ENCODE measurements at regions of chr6 and their contacts with region 1.

Region 1: DNA sequence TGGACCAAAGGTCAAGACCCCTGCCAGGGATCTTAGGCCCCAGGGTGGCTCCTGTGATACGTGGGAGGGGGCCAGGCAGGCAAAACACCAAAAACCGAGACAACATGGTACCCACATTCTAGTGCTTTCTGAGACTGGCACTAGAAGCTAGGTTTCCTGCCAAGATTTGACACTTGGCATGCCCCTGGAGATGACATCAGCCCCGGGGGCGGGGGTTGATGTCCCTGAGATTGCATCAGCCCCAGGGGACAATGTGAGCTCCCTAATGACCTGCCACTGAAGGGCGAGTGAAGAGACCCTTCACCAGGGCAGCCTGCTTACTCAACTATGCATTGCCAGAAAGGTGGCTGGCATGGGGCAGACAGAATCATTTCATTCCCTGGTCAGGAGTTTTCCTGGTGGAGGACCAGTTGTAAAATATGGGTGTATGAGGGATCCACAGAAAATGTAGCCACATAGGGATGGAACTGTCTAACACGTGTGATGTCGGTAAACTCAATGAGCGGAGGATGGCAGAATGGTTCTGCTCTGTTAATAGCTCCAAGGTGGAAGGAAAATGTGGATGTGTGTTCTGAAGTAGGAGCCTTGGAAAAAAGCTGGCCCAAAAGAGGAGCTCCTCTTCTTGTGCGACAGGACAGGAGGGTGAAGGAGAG is 219.7 kb downstream of the UNC5CL start:
- DNase-seq: no peak
- ATAC-seq: no peak
- H3K4me3 ChIP-seq: no peak overlapping the region
- H3K4me3 Mint-ChIP-seq: no peak overlapping the region
- H3K27ac ChIP-seq: no peak overlapping the region
- H3K27ac Mint-ChIP-seq: no peak overlapping the region
- H3K4me1 ChIP-seq: peaks cover 4% of the 10 kb centered on the region
- H3K4me1 Mint-ChIP-seq: peaks cover 0 to 6% of the 10 kb centered on the region in 2 donors
- H3K27me3 ChIP-seq: no peaks in the 10 kb centered on the region
- H3K27me3 Mint-ChIP-seq: peaks cover 1 to 20% of the 10 kb centered on the region in 2 donors
- CTCF ChIP-seq: no peak

Region 2: DNA sequence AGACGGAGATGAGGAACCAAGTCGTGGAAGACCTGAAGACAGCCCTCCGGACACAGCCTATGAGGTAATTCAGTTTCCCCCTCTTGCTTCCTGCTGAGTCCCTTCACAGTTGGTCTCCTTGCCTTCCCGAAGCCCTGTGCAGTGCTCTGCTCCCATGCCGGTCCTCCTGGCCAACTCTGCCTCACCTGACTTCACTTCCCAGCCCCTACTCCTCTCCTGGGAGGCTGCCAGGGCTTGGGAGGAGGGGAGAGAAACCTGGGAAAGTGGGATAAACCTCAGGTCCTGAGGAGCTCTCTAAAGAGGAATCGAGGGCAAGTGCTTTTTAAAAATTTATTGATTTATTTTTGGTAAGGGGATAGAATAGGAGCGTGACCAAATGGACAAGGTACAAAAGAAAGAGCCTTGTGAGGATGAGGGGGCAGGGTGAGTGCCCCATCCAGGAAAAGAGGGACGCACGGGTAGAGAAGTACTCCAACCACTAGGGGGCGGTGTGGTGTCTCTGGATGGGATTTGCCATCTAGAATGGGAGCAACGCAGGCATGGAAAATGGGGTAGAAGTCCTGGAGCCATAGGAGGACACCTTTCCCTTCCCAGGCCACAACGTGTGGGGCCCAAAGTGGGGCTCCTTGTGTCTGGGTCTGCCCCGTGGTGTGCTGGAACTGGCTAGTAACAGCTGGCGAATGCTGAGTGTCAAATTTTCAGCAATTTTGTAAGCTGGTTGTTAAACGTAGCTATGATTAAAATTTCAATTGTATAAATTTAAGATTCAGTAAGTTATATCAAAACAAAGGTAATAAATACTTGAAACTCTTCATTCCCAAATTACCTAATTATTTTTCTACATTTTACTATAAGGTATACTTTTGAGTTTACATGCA is 954.1 kb before region 1 on chr6:
- intact Hi-C with region 1: loop called (anchors 10 kb)
- DNase-seq: peak; percentile 52 to 66
- ATAC-seq: peak in 1 of 3 donors; percentile 55
- H3K4me3 ChIP-seq: no peak overlapping the region
- H3K4me3 Mint-ChIP-seq: no peak overlapping the region
- H3K27ac ChIP-seq: no peak overlapping the region
- H3K27ac Mint-ChIP-seq: no peak overlapping the region
- H3K4me1 ChIP-seq: no peaks in the 10 kb centered on the region
- H3K4me1 Mint-ChIP-seq: no peaks in the 10 kb centered on the region
- H3K27me3 ChIP-seq: no peaks in the 10 kb centered on the region
- H3K27me3 Mint-ChIP-seq: peaks cover 10 to 26% of the 10 kb centered on the region in 2 donors
- CTCF ChIP-seq: peak; percentile 80

Region 3: GRCh38 chr6:40328405-40328987 is 490.8 kb before region 1 on chr6:
- intact Hi-C with region 1: loop called (anchors 5 kb)
- DNase-seq: peak; percentile 44 to 66
- ATAC-seq: peak; percentile 52 to 75 (median 71)
- H3K4me3 ChIP-seq: no peak overlapping the region
- H3K4me3 Mint-ChIP-seq: no peak overlapping the region
- H3K27ac ChIP-seq: no peak overlapping the region
- H3K27ac Mint-ChIP-seq: peak overlapping the region in 1 of 2 donors; percentile 67
- H3K4me1 ChIP-seq: no peaks in the 10 kb centered on the region
- H3K4me1 Mint-ChIP-seq: peaks cover 7 to 19% of the 10 kb centered on the region in 2 donors
- H3K27me3 ChIP-seq: no peaks in the 10 kb centered on the region
- H3K27me3 Mint-ChIP-seq: peaks cover 16 to 53% of the 10 kb centered on the region in 2 donors
- CTCF ChIP-seq: peak; percentile 72

Region 4: DNA sequence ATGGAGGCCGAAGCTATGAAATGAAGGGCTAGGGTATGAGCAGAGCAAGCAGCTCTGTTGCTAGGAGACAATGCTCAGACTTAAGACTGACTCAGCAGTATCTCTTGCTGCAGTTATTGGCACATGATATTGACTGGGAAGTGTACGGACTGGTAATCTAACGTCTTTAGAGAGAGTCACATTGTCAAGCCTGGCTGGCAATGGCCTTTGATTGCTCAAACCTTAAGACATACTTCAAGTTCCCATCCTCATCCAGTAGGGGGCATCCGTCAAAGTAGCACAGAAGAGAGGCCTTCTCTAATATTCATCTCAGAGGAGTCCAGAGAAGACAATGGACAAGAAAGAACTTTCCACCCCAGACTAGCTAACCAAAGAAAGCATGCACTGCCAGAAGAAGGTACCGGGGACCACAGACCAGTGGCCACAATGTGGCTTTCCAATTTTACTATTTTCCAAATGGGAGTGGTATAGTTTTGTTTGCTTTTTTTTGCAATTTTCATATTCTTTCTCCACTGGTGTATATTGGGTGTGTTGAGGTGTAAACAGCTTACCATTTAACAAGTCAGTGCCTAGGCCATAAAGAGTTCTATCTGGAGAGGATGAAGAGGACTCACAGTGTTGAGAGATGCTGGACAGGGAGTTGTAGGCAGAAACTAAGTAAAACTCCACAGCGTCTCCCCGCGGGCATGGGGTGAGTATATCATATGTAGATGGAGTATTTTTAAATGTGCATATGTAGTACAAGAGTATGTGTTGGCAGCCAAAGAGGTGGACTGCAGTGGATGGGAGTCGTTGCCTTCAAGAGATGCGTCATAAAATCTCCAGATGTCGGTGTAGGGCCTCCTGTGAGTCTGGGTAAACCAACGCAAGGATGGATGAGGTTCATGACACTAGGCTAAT is 268.9 kb before region 1 on chr6:
- intact Hi-C with region 1: loop called (anchors 1 kb)
- DNase-seq: peak in 1 of 2 donors; percentile 52
- ATAC-seq: peak; percentile 55 to 75 (median 72)
- H3K4me3 ChIP-seq: no peak overlapping the region
- H3K4me3 Mint-ChIP-seq: no peak overlapping the region
- H3K27ac ChIP-seq: no peak overlapping the region
- H3K27ac Mint-ChIP-seq: no peak overlapping the region
- H3K4me1 ChIP-seq: no peaks in the 10 kb centered on the region
- H3K4me1 Mint-ChIP-seq: peaks cover 6 to 7% of the 10 kb centered on the region in 2 donors
- H3K27me3 ChIP-seq: no peaks in the 10 kb centered on the region
- H3K27me3 Mint-ChIP-seq: no peaks in the 10 kb centered on the region
- CTCF ChIP-seq: peak; percentile 59